ENCODE measurements at regions of chr21 and their contacts with region 1.

Region 1: GRCh38 chr21:44836666-44837471 is 19.0 kb upstream of the SUMO3 start:
- DNase-seq: peak; percentile 47 to 82 (median 64)
- ATAC-seq: peak; percentile 87
- H3K4me3 ChIP-seq: no peak overlapping the region
- H3K27ac ChIP-seq: no peak overlapping the region; the same call in 2 of the 3 replicates
- H3K4me1 ChIP-seq: peaks cover 21 to 48% of the 10 kb centered on the region in 2 experiments
- H3K27me3 ChIP-seq: peaks cover 7 to 23% of the 10 kb centered on the region in 2 experiments; a peak in 4 of 5 replicates
- CTCF ChIP-seq: no peak
- EP300 ChIP-seq: 0 out of 2 replicates have a peak, but pooled peaks have one; percentile 19
- POLR2A ChIP-seq: no peak
- RAD21 ChIP-seq: peak in 1 of 2 experiments; percentile 25; a peak in 1 of 4 replicates

Region 2: GRCh38 chr21:44049182-44049978 is 787.5 kb before region 1 on chr21:
- CTCF ChIA-PET with region 1: no interaction called
- POLR2A ChIA-PET with region 1: no interaction called
- in situ Hi-C with region 1: no loop called
- intact Hi-C with region 1: loop called (anchors 10 kb)
- DNase-seq: no peak
- ATAC-seq: no peak
- H3K4me3 ChIP-seq: no peak overlapping the region
- H3K27ac ChIP-seq: no peak overlapping the region
- H3K4me1 ChIP-seq: 0 out of 5 replicates have a peak, but pooled peaks cover 0 to 5% of the 10 kb centered on the region in 2 experiments
- H3K27me3 ChIP-seq: no peaks in the 10 kb centered on the region
- CTCF ChIP-seq: no peak
- EP300 ChIP-seq: no peak
- POLR2A ChIP-seq: no peak
- RAD21 ChIP-seq: no peak

Region 3: GRCh38 chr21:46171996-46172862 is 1335.4 kb after region 1 on chr21:
- CTCF ChIA-PET with region 1: no interaction called
- POLR2A ChIA-PET with region 1: no interaction called
- in situ Hi-C with region 1: no loop called
- intact Hi-C with region 1: no loop called
- DNase-seq: peak in 2 of 4 experiments; percentile 25 to 48
- ATAC-seq: peak; percentile 61; the same call in 2 of the 3 replicates
- H3K4me3 ChIP-seq: no peak overlapping the region
- H3K27ac ChIP-seq: no peak overlapping the region; the same call in 2 of the 3 replicates
- H3K4me1 ChIP-seq: peaks cover 2 to 26% of the 10 kb centered on the region in 2 experiments; a peak in 4 of 5 replicates
- H3K27me3 ChIP-seq: no peaks in the 10 kb centered on the region
- CTCF ChIP-seq: no peak
- EP300 ChIP-seq: no peak
- POLR2A ChIP-seq: no peak
- RAD21 ChIP-seq: no peak